CD4-positive, alpha-beta T cell (primary cell): ENCODE measurements at regions of chr12 and their contacts with region 1.

Region 1: GRCh38 chr12:6423267-6424007 is 21.3 kb upstream of the CD27 start:
- DNase-seq: peak; percentile 58 to 94 (median 67)
- ATAC-seq: peak; percentile 73
- H3K4me3 ChIP-seq: no peak overlapping the region
- H3K4me3 Mint-ChIP-seq: peak overlapping the region; percentile 36
- H3K27ac ChIP-seq: peak overlapping the region in 1 of 2 donors; percentile 29
- H3K27ac Mint-ChIP-seq: peak overlapping the region; percentile 65
- H3K4me1 ChIP-seq: peaks cover 43% of the 10 kb centered on the region
- H3K4me1 Mint-ChIP-seq: peaks cover 32% of the 10 kb centered on the region
- H3K27me3 ChIP-seq: no peaks in the 10 kb centered on the region
- H3K27me3 Mint-ChIP-seq: no peaks in the 10 kb centered on the region
- CTCF ChIP-seq: peak; percentile 75

Region 2: GRCh38 chr12:6323340-6323994 is 100.0 kb before region 1 on chr12:
- CTCF ChIA-PET with region 1: interaction called, 3 read pairs
- POLR2A ChIA-PET with region 1: no interaction called
- intact Hi-C with region 1: loop called in 1 of 2 experiments (anchors 5 kb)
- DNase-seq: peak in 7 of 14 experiments; percentile 18 to 83 (median 63)
- ATAC-seq: peak; percentile 89
- H3K4me3 ChIP-seq: peak overlapping the region; percentile 12
- H3K4me3 Mint-ChIP-seq: peak overlapping the region; percentile 86
- H3K27ac ChIP-seq: peak overlapping the region; percentile 12 to 13
- H3K27ac Mint-ChIP-seq: peak overlapping the region; percentile 85
- H3K4me1 ChIP-seq: peaks cover 45% of the 10 kb centered on the region
- H3K4me1 Mint-ChIP-seq: peaks cover 60% of the 10 kb centered on the region
- H3K27me3 ChIP-seq: no peaks in the 10 kb centered on the region
- H3K27me3 Mint-ChIP-seq: no peaks in the 10 kb centered on the region
- CTCF ChIP-seq: peak; percentile 72

Region 3: DNA sequence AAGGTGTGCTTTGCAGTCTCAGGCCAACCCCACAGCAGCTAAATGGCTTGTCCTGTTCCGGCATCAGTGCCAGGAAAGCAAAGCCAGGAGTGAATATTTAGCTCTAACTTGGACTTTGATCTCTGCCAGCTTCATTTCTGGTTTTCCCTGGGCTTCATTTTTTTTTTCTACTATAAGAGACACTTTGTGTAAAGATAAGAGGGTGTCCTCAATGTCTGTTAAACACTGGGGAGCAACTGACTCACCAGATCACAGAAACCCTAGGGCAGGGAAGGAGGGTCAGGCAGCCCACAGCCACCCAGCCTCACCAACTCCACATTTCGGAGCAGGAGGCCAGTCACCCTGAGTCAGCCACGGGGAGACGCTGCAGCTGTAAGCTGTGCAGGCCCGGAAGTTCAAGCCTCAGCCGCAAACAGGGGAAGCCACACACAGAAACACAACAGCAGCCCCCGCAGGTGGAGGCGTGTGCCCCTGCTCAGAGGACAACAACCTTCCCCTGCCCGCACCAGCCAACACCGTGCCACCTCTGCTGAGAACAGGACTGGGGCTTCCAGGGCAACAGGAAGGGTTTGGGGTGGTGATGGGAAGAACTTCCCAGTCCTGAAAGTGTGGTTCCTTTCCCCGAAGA is 87.9 kb before region 1 on chr12:
- CTCF ChIA-PET with region 1: interaction called, 4 read pairs
- POLR2A ChIA-PET with region 1: interaction called, 6 read pairs
- intact Hi-C with region 1: loop called (anchors 2 kb)
- DNase-seq: peak; percentile 68 to 92 (median 82)
- ATAC-seq: peak; percentile 77
- H3K4me3 ChIP-seq: peak overlapping the region; percentile 100
- H3K4me3 Mint-ChIP-seq: no peak overlapping the region
- H3K27ac ChIP-seq: peak overlapping the region; percentile 80 to 90
- H3K27ac Mint-ChIP-seq: no peak overlapping the region
- H3K4me1 ChIP-seq: peaks cover 86% of the 10 kb centered on the region
- H3K4me1 Mint-ChIP-seq: peaks cover 8% of the 10 kb centered on the region
- H3K27me3 ChIP-seq: no peaks in the 10 kb centered on the region
- H3K27me3 Mint-ChIP-seq: no peaks in the 10 kb centered on the region
- CTCF ChIP-seq: peak; percentile 76

Region 4: DNA sequence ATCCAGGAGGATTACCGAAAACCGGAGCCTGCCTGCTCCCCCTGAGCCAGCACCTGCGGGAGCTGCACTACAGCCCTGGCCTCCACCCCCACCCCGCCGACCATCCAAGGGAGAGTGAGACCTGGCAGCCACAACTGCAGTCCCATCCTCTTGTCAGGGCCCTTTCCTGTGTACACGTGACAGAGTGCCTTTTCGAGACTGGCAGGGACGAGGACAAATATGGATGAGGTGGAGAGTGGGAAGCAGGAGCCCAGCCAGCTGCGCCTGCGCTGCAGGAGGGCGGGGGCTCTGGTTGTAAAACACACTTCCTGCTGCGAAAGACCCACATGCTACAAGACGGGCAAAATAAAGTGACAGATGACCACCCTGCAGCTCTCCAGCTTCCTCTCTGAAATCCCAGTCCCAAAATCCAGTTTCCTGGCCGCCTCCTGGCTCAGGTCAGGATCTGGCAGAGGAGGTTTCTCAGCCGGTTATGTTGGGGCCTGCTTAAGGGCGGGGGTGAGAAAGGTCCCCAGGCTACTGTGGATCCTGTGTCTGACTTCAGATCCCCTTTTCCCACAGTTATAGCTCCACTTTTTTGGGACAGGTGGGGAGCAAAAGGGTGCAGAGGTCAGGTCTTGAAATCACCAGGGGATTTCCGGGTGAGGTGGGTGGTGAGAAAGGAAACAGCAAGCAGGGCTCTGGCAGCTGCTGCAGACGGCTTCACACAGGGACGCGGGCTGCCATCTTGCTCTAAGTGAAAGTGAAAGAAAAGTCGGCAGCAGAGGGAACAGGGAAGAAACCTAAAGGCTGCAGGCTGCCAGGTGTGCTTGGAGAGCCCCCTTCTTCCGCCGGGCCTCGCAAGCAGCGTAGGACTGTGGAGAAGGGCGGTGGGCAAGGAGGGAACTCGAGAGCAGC is 28.2 kb after region 1 on chr12 and contains the start of gene TAPBPL:
- CTCF ChIA-PET with region 1: interaction called, 10 read pairs
- POLR2A ChIA-PET with region 1: interaction called, 29 read pairs
- intact Hi-C with region 1: no loop called
- DNase-seq: peak; percentile 61 to 95 (median 74)
- ATAC-seq: peak; percentile 92
- H3K4me3 ChIP-seq: peak within 1 kb of the TSS; percentile 97
- H3K4me3 Mint-ChIP-seq: peak within 1 kb of the TSS; percentile 94
- H3K27ac ChIP-seq: peak within 1 kb of the TSS; percentile 96 to 99
- H3K27ac Mint-ChIP-seq: peak within 1 kb of the TSS; percentile 98
- H3K4me1 ChIP-seq: peaks cover 71% of the 10 kb centered on the region
- H3K4me1 Mint-ChIP-seq: peaks cover 77% of the 10 kb centered on the region
- H3K27me3 ChIP-seq: no peaks in the 10 kb centered on the region
- H3K27me3 Mint-ChIP-seq: no peaks in the 10 kb centered on the region
- CTCF ChIP-seq: no peak
- total RNA-seq, gene TAPBPL: 14.7 to 15.8 TPM

Region 5: GRCh38 chr12:6493497-6494257 is 70.2 kb after region 1 on chr12 and contains the start of gene NCAPD2:
- CTCF ChIA-PET with region 1: no interaction called
- POLR2A ChIA-PET with region 1: no interaction called
- intact Hi-C with region 1: loop called in 1 of 2 experiments (anchors 1 kb)
- DNase-seq: peak; percentile 87 to 98 (median 92)
- ATAC-seq: peak; percentile 84
- H3K4me3 ChIP-seq: peak within 1 kb of the TSS; percentile 96
- H3K4me3 Mint-ChIP-seq: peak within 1 kb of the TSS; percentile 93
- H3K27ac ChIP-seq: peak within 1 kb of the TSS; percentile 89 to 94
- H3K27ac Mint-ChIP-seq: peak within 1 kb of the TSS; percentile 91
- H3K4me1 ChIP-seq: peaks cover 34% of the 10 kb centered on the region
- H3K4me1 Mint-ChIP-seq: peaks cover 48% of the 10 kb centered on the region
- H3K27me3 ChIP-seq: no peaks in the 10 kb centered on the region
- H3K27me3 Mint-ChIP-seq: no peaks in the 10 kb centered on the region
- CTCF ChIP-seq: no peak
- total RNA-seq, gene NCAPD2: 13.7 to 14.9 TPM

Region 6: DNA sequence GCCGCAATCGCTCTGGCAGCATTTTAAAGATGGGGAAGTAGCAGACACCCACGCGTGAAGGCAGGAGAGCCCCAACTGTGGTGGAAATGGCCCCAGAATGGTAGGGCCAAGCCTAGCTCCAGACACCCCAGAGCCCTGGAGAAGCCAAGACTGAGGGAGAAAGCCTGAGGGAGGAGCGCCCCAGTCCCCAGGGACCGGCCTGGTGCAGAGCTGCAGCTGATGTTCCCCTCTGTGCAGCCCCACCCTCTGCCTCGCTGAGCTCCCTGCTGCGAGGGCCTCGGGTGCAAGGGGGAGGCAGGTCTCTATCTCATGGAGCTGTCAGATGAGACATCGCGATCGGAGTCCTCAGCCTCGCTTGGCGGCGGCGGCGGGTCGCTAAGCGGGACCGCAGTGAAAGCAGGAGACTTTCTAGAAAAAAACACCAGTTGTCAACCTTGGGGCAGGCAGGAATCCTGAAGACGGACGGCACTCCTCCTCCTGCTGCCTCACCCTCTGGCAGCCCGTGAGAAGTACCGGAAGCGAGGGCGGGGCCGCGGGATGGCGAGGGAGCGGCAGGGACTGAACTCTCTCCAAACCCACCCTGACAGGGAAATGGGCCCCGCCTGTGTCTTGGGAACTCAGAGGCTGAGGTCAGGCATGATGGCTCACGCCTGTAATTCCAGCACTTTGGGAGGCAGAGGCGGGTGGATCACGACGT is 116.9 kb after region 1 on chr12:
- CTCF ChIA-PET with region 1: interaction called, 39 read pairs
- POLR2A ChIA-PET with region 1: interaction called, 11 read pairs
- intact Hi-C with region 1: loop called (anchors 1 kb)
- DNase-seq: peak in 10 of 14 experiments; percentile 33 to 67 (median 54)
- ATAC-seq: peak; percentile 37
- H3K4me3 ChIP-seq: peak overlapping the region; percentile 26
- H3K4me3 Mint-ChIP-seq: peak overlapping the region; percentile 84
- H3K27ac ChIP-seq: no peak overlapping the region
- H3K27ac Mint-ChIP-seq: peak overlapping the region; percentile 90
- H3K4me1 ChIP-seq: peaks cover 72% of the 10 kb centered on the region
- H3K4me1 Mint-ChIP-seq: peaks cover 59% of the 10 kb centered on the region
- H3K27me3 ChIP-seq: no peaks in the 10 kb centered on the region
- H3K27me3 Mint-ChIP-seq: no peaks in the 10 kb centered on the region
- CTCF ChIP-seq: no peak

Region 7: GRCh38 chr12:6554168-6555017 is 131.0 kb after region 1 on chr12:
- CTCF ChIA-PET with region 1: interaction called, 6 read pairs
- POLR2A ChIA-PET with region 1: no interaction called
- intact Hi-C with region 1: loop called (anchors 5 kb)
- DNase-seq: peak; percentile 53 to 83 (median 65)
- ATAC-seq: peak; percentile 55
- H3K4me3 ChIP-seq: peak overlapping the region; percentile 74
- H3K4me3 Mint-ChIP-seq: peak overlapping the region; percentile 88
- H3K27ac ChIP-seq: no peak overlapping the region
- H3K27ac Mint-ChIP-seq: peak overlapping the region; percentile 57
- H3K4me1 ChIP-seq: peaks cover 83% of the 10 kb centered on the region
- H3K4me1 Mint-ChIP-seq: peaks cover 43% of the 10 kb centered on the region
- H3K27me3 ChIP-seq: no peaks in the 10 kb centered on the region
- H3K27me3 Mint-ChIP-seq: no peaks in the 10 kb centered on the region
- CTCF ChIP-seq: peak; percentile 65